Sigmoid colon (tissue), 7 donors: ENCODE measurements at regions of chr1 and their contacts with region 1.

Region 1: GRCh38 chr1:163321311-163322305 is at the start of gene NUF2:
- DNase-seq: peak; percentile 99
- H3K4me3 ChIP-seq: peak within 1 kb of the TSS; percentile 59 to 68 (median 68)
- H3K27ac ChIP-seq: peak within 1 kb of the TSS; percentile 78 to 83 (median 82)
- H3K4me1 ChIP-seq: peaks cover 0 to 15% (median 15%) of the 10 kb centered on the region in 4 donors
- H3K27me3 ChIP-seq: no peaks in the 10 kb centered on the region
- CTCF ChIP-seq: no peak
- EP300 ChIP-seq: peak in 2 of 4 donors; percentile 26 to 37
- POLR2A ChIP-seq: no peak
- total RNA-seq, gene NUF2: 0.36 to 1.9 TPM in 2 of 4 donors, not detected in the others

Region 2: DNA sequence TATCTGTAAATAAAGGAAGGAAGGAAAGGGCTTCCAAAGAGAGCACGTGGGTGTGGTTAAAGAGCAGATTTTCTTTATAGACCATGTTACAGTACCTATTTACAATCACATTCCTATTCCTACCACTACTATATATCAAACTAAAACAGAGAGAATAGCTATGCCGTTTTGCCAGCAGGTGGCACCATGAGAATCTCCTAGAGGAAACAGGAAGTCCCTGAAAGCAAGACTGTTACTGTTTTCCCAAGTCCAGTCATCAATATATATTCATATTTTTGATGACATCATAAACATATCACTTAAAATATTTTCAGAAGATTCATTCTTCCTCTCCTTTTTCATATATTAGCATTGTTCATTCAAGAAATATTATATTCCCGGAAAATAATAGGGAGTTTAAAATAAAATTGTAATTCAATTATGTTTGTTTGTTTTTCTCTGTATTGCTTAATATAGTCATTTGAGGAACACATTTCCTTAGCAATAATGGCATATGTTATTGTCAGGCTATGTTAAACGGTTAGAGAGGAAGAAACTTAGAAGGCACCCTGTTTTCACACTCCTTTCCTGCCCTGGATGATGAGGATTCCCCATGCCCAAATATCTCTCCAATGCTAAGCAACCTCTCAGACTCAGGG is 467.2 kb before region 1 on chr1:
- intact Hi-C with region 1: loop called (anchors 2 kb)
- DNase-seq: no peak
- H3K4me3 ChIP-seq: no peak overlapping the region
- H3K27ac ChIP-seq: no peak overlapping the region
- H3K4me1 ChIP-seq: no peaks in the 10 kb centered on the region
- H3K27me3 ChIP-seq: no peaks in the 10 kb centered on the region
- CTCF ChIP-seq: peak; percentile 12 to 64 (median 51)
- EP300 ChIP-seq: no peak
- POLR2A ChIP-seq: no peak

Region 3: DNA sequence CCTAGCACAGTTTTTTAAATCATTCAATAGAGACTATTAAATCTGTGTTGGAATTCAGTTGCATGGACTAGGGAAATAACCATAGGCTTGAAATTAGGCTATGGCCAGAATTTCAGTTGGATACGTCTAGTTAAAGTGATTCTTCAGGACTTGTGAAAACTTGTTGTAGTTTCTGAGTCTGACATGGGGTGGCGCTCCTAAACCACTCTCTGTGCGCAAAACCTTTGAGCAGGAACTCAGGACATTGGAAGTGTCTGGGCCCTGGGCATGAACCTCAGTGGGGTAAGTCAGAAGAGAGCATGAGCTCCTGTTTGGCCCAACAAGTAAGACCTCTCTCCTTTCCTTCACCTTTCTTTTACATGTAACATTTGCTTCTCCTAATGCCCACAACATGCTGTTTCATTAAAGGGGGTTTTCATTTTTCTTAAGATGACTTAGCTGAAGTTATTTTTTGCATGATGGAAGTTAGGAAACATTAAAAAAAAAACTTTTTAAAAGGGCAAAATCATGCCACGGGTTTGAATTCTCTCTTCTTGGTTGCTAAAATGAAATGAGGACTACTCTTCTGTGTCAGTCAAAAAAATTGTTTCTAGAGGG is 443.5 kb before region 1 on chr1:
- intact Hi-C with region 1: loop called (anchors 1 kb)
- DNase-seq: peak; percentile 71
- H3K4me3 ChIP-seq: no peak overlapping the region
- H3K27ac ChIP-seq: no peak overlapping the region
- H3K4me1 ChIP-seq: no peaks in the 10 kb centered on the region
- H3K27me3 ChIP-seq: no peaks in the 10 kb centered on the region
- CTCF ChIP-seq: peak; percentile 51 to 76 (median 68)
- EP300 ChIP-seq: no peak
- POLR2A ChIP-seq: no peak